T-cell (primary cell): ENCODE measurements at regions of chr6 and their contacts with region 1.

Region 1: GRCh38 chr6:106039836-106040592 is 46.1 kb upstream of the PRDM1 start:
- DNase-seq: no peak
- ATAC-seq: no peak
- H3K4me3 ChIP-seq: no peak overlapping the region
- H3K4me3 Mint-ChIP-seq: no peak overlapping the region
- H3K27ac ChIP-seq: no peak overlapping the region
- H3K27ac Mint-ChIP-seq: no peak overlapping the region
- H3K4me1 ChIP-seq: no peaks in the 10 kb centered on the region
- H3K4me1 Mint-ChIP-seq: peaks cover 0 to 6% (median 5%) of the 10 kb centered on the region in 3 donors
- H3K27me3 ChIP-seq: no peaks in the 10 kb centered on the region
- H3K27me3 Mint-ChIP-seq: peaks cover 0 to 8% of the 10 kb centered on the region in 2 donors

Region 2: GRCh38 chr6:104418125-104418524 is 1621.9 kb before region 1 on chr6:
- CTCF ChIA-PET with region 1: no interaction called
- POLR2A ChIA-PET with region 1: no interaction called
- DNase-seq: no peak
- ATAC-seq: no peak
- H3K4me3 ChIP-seq: no peak overlapping the region
- H3K4me3 Mint-ChIP-seq: no peak overlapping the region
- H3K27ac ChIP-seq: no peak overlapping the region
- H3K27ac Mint-ChIP-seq: no peak overlapping the region
- H3K4me1 ChIP-seq: no peaks in the 10 kb centered on the region
- H3K4me1 Mint-ChIP-seq: no peaks in the 10 kb centered on the region
- H3K27me3 ChIP-seq: no peaks in the 10 kb centered on the region
- H3K27me3 Mint-ChIP-seq: peaks cover 0 to 2% of the 10 kb centered on the region in 2 donors

Region 3: DNA sequence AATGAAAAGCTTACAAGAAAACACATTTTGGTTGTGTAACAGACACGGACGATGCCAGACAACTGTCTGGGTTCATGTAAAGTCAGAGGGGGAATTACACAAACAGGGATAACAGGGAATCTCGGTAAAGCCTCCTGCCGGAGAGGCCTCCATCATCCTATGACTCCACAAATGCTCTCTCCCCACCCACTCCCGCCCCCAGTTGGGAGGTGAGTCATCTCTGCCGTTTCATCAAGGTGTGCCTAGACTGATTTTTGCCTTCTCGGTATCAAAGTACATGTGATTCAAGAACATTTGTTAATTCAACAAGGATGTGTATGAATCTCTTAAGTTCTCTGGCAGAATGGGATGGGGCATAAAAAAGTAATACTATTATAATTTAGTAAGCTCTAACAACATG is 258.8 kb before region 1 on chr6:
- CTCF ChIA-PET with region 1: no interaction called
- POLR2A ChIA-PET with region 1: interaction called in 1 of 2 experiments, 12 read pairs
- DNase-seq: peak in 4 of 35 experiments; percentile 9 to 34 (median 23)
- ATAC-seq: peak in 3 of 4 experiments; percentile 25 to 47 (median 33)
- H3K4me3 ChIP-seq: no peak overlapping the region
- H3K4me3 Mint-ChIP-seq: peak overlapping the region in 1 of 3 donors; percentile 58
- H3K27ac ChIP-seq: no peak overlapping the region
- H3K27ac Mint-ChIP-seq: peak overlapping the region; percentile 79 to 89
- H3K4me1 ChIP-seq: peaks cover 16 to 52% of the 10 kb centered on the region in 2 experiments
- H3K4me1 Mint-ChIP-seq: peaks cover 51 to 79% (median 60%) of the 10 kb centered on the region in 3 donors
- H3K27me3 ChIP-seq: peaks cover 0 to 2% of the 10 kb centered on the region in 2 experiments
- H3K27me3 Mint-ChIP-seq: no peaks in the 10 kb centered on the region

Region 4: GRCh38 chr6:106163446-106163965 is 123.5 kb after region 1 on chr6:
- CTCF ChIA-PET with region 1: no interaction called
- POLR2A ChIA-PET with region 1: no interaction called
- DNase-seq: peak in 26 of 35 experiments; percentile 17 to 66 (median 26)
- ATAC-seq: peak; percentile 65 to 76 (median 74)
- H3K4me3 ChIP-seq: no peak overlapping the region
- H3K4me3 Mint-ChIP-seq: peak overlapping the region; percentile 30 to 55 (median 51)
- H3K27ac ChIP-seq: peak overlapping the region; percentile 87
- H3K27ac Mint-ChIP-seq: peak overlapping the region; percentile 89 to 92
- H3K4me1 ChIP-seq: peaks cover 0 to 31% of the 10 kb centered on the region in 2 experiments
- H3K4me1 Mint-ChIP-seq: peaks cover 30 to 40% (median 30%) of the 10 kb centered on the region in 3 donors
- H3K27me3 ChIP-seq: no peaks in the 10 kb centered on the region
- H3K27me3 Mint-ChIP-seq: no peaks in the 10 kb centered on the region

Region 5: DNA sequence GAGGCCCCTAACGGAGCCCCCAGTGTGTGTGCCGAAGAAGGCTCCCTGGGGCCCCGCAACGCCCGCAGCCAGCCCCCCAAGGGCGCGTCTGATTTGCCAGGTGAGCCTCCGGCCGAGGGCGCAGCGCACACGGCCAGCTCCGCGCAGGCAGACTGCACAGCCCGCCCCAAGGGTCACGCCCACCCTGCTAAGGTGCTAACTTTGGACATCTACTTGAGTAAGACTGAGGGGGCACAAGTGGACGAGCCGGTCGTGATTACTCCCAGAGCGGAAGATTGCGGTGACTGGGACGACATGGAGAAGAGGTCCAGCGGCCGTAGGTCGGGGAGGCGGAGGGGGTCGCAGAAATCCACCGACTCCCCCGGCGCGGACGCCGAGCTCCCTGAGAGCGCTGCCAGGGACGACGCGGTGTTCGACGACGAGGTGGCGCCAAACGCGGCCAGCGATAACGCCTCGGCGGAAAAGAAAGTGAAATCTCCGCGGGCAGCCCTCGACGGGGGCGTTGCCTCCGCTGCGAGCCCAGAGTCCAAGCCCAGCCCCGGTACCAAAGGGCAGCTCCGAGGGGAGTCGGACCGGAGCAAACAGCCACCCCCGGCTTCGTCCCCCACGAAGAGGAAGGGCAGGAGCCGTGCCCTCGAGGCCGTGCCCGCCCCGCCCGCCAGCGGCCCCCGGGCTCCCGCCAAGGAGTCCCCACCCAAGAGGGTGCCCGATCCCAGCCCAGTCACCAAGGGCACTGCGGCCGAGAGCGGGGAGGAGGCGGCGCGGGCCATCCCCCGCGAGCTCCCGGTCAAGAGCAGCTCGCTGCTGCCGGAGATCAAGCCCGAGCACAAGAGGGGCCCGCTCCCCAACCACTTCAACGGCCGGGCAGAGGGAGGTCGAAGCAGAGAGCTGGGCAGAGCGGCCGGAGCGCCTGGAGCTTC is 472.3 kb after region 1 on chr6:
- CTCF ChIA-PET with region 1: no interaction called
- POLR2A ChIA-PET with region 1: no interaction called
- DNase-seq: peak; percentile 53 to 89 (median 75)
- ATAC-seq: peak; percentile 75 to 82 (median 78)
- H3K4me3 ChIP-seq: peak overlapping the region; percentile 82 to 91
- H3K4me3 Mint-ChIP-seq: peak overlapping the region; percentile 94 to 97 (median 96)
- H3K27ac ChIP-seq: peak overlapping the region; percentile 95
- H3K27ac Mint-ChIP-seq: peak overlapping the region; percentile 95 to 97
- H3K4me1 ChIP-seq: peaks cover 35 to 48% of the 10 kb centered on the region in 2 experiments
- H3K4me1 Mint-ChIP-seq: peaks cover 55 to 60% (median 55%) of the 10 kb centered on the region in 3 donors
- H3K27me3 ChIP-seq: peaks cover 0 to 4% of the 10 kb centered on the region in 2 experiments
- H3K27me3 Mint-ChIP-seq: no peaks in the 10 kb centered on the region